Psoas muscle (tissue), 8 donors: ENCODE measurements at regions of chr2 and their contacts with region 1.

Region 1: DNA sequence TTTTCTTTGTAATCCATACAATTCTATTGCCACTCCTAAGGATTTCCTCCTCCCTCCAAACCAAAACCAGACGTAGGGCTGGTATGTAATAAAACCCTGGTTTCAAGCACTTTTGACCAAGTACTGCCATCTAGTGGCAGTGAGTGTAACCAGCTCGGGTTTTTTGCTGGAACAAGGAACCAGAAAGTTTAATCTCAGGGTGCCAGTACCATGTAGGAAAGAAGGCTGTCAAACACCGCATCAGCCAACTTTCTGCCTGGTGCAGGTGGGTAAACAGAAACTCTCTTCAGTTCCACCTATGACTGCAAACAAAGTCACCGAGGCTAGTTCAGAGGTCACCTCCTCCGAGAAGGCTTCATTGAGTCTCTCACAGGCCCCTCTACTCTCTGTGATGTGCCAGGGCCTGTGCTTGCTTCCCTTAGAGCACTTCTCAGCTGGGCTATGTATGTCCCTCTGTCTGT is 10.2 kb upstream of the THNSL2 start:
- DNase-seq: no peak
- ATAC-seq: peak; percentile 79 to 92 (median 88)
- H3K4me3 ChIP-seq: no peak overlapping the region
- H3K27ac ChIP-seq: no peak overlapping the region
- H3K4me1 ChIP-seq: peaks cover 3% of the 10 kb centered on the region
- H3K27me3 ChIP-seq: no peaks in the 10 kb centered on the region
- CTCF ChIP-seq: peak; percentile 89

Region 2: DNA sequence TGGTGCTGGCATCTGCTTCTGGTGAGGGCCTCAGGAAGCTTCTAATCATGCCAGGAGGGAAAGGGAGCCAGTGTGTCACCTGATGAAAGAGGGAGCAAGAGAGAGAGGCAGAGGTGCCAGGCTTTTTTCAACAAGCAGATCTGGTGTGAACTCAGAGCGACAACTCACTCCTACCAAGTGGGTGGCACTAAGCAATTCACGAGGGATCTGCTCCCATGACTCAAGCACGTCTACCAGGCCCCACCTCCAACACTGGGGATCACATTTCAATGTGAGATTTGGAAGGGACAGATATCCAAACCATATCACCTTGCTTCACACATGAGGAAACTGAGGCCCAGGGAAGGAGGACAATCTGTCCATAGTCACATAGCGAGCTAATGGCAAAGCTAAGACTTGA is 51.2 kb before region 1 on chr2:
- intact Hi-C with region 1: loop called in 1 of 2 experiments (anchors 5 kb)
- DNase-seq: no peak
- ATAC-seq: peak; percentile 71 to 84 (median 81)
- H3K4me3 ChIP-seq: no peak overlapping the region
- H3K27ac ChIP-seq: peak overlapping the region; percentile 38
- H3K4me1 ChIP-seq: no peaks in the 10 kb centered on the region
- H3K27me3 ChIP-seq: no peaks in the 10 kb centered on the region
- CTCF ChIP-seq: no peak

Region 3: GRCh38 chr2:88121678-88122077 is 38.3 kb before region 1 on chr2:
- intact Hi-C with region 1: no loop called
- DNase-seq: no peak
- ATAC-seq: no peak
- H3K4me3 ChIP-seq: no peak overlapping the region
- H3K27ac ChIP-seq: no peak overlapping the region
- H3K4me1 ChIP-seq: peaks cover 15% of the 10 kb centered on the region
- H3K27me3 ChIP-seq: no peaks in the 10 kb centered on the region
- CTCF ChIP-seq: no peak

Region 4: GRCh38 chr2:88187038-88187676 is 27.2 kb after region 1 on chr2:
- intact Hi-C with region 1: no loop called
- DNase-seq: peak; percentile 49 to 85
- ATAC-seq: peak; percentile 71 to 95 (median 80)
- H3K4me3 ChIP-seq: no peak overlapping the region
- H3K27ac ChIP-seq: no peak overlapping the region
- H3K4me1 ChIP-seq: no peaks in the 10 kb centered on the region
- H3K27me3 ChIP-seq: no peaks in the 10 kb centered on the region
- CTCF ChIP-seq: peak; percentile 70

Region 5: GRCh38 chr2:88247531-88247930 is 87.5 kb after region 1 on chr2:
- intact Hi-C with region 1: no loop called
- DNase-seq: no peak
- ATAC-seq: no peak
- H3K4me3 ChIP-seq: no peak overlapping the region
- H3K27ac ChIP-seq: no peak overlapping the region
- H3K4me1 ChIP-seq: no peaks in the 10 kb centered on the region
- H3K27me3 ChIP-seq: no peaks in the 10 kb centered on the region
- CTCF ChIP-seq: no peak